ENCODE measurements at regions of chr16 and their contacts with region 1.

Region 1: DNA sequence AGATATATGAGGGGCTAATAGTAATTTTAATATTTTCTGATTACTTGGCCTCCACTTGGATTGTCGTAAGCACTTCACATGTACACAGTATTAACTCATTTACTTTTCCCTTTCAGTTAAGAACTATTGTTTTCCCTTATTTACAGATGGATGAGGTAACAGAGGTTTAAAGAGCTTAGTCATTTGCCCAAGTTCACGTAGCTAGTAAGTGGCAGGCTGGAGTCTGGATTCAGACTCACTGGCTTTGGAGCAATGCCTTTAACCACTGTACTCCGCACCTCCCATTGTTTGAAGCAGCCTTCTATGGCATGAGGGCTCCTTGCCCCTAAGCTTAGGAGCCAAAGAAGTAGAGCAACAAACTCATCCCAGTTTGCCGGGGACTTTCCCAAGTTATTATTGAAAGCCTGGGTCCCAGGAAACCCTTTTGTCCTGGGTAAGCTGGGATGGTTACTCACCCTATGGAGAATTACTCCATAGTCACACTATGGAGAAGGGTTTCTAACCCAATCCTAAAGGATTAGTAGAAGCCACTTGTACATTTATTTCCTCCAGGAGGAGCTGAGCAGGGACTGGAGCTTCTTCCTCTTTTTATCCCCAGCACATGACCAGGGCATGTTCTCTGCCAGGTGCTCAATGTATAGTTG is 12.3 kb downstream of the FOXL1 start:
- DNase-seq: peak; percentile 89
- ATAC-seq: peak; percentile 85
- H3K4me3 ChIP-seq: no peak overlapping the region
- H3K27ac ChIP-seq: peak overlapping the region; percentile 99
- H3K4me1 ChIP-seq: peaks cover 40% of the 10 kb centered on the region
- H3K27me3 ChIP-seq: no peaks in the 10 kb centered on the region
- CTCF ChIP-seq: no peak

Region 2: GRCh38 chr16:86568677-86569623 is 21.7 kb before region 1 on chr16:
- CTCF ChIA-PET with region 1: no interaction called
- POLR2A ChIA-PET with region 1: no interaction called
- intact Hi-C with region 1: no loop called
- DNase-seq: no peak
- ATAC-seq: no peak
- H3K4me3 ChIP-seq: no peak overlapping the region
- H3K27ac ChIP-seq: no peak overlapping the region
- H3K4me1 ChIP-seq: peaks cover 11% of the 10 kb centered on the region
- H3K27me3 ChIP-seq: no peaks in the 10 kb centered on the region
- CTCF ChIP-seq: no peak

Region 3: DNA sequence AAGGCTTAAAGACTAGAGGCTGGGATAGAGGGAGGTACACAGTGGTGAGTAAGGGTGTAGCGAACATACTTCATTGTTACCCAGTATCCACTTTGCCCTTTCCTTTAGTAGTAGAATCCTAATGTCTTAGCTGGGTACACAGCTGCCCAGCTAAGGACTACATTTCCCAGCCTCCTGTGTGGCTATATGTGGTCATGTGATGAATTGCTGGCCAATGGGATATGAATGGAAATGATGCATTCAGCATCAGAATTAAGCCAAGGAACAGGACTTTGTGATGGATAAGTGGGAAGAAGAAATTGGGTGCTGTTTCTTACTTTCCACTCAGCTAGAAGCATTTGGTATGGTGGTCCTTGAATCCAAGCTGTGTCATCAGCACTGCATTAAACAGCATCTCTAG is 43.7 kb after region 1 on chr16:
- CTCF ChIA-PET with region 1: no interaction called
- POLR2A ChIA-PET with region 1: no interaction called
- intact Hi-C with region 1: loop called (anchors 1 kb)
- DNase-seq: peak; percentile 16
- ATAC-seq: no peak
- H3K4me3 ChIP-seq: no peak overlapping the region
- H3K27ac ChIP-seq: no peak overlapping the region
- H3K4me1 ChIP-seq: peaks cover 31% of the 10 kb centered on the region
- H3K27me3 ChIP-seq: no peaks in the 10 kb centered on the region
- CTCF ChIP-seq: no peak

Measured in PC-3 (cell line).